ENCODE measurements at regions of chr16 and their contacts with region 1.

Region 1: DNA sequence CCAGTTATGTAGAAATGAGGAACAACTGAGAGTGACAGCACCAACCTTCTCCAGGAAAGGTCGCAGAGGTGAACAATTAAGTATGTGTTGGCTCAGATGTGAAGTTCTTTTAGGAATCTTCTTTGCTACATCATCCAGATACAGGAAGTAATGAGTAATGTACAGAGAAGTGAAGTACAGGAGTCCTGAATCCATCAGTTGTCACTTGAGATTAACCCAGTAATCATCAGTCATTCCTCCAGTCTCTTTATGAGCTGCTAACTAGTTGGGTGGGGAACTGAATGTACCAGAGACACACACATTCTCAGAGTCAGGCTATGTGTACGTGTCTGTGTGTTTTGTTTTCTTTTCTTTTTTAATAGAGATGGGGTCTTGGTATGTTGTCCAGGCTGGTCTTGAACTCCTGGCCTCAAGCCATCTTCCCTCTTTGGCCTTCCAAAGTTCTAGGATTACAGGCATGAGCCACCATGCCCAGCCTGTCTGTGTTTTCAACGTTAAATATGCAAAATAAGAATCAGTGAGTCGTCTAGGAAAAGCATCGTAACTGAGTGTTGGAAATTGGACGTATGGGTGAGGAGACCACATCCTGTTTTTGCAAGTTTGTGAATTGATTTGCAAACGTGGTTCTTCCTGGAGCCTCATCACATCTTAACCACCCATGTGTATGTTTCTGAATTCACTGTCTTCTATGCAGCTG is 19.9 kb downstream of the ZNF200 start:
- DNase-seq: peak in 7 of 14 experiments; percentile 30 to 89 (median 43)
- ATAC-seq: peak; percentile 86
- H3K4me3 ChIP-seq: no peak overlapping the region
- H3K4me3 Mint-ChIP-seq: peak overlapping the region; percentile 71
- H3K27ac ChIP-seq: peak overlapping the region; percentile 48 to 79
- H3K27ac Mint-ChIP-seq: peak overlapping the region; percentile 96
- H3K4me1 ChIP-seq: peaks cover 48% of the 10 kb centered on the region
- H3K4me1 Mint-ChIP-seq: peaks cover 39% of the 10 kb centered on the region
- H3K27me3 ChIP-seq: no peaks in the 10 kb centered on the region
- H3K27me3 Mint-ChIP-seq: no peaks in the 10 kb centered on the region
- CTCF ChIP-seq: no peak

Region 2: GRCh38 chr16:3158471-3159314 is 56.4 kb before region 1 on chr16:
- CTCF ChIA-PET with region 1: no interaction called
- POLR2A ChIA-PET with region 1: interaction called, 10 read pairs
- intact Hi-C with region 1: loop called in 1 of 2 experiments (anchors 5 kb)
- DNase-seq: peak; percentile 92 to 98 (median 94)
- ATAC-seq: peak; percentile 89
- H3K4me3 ChIP-seq: peak overlapping the region; percentile 85
- H3K4me3 Mint-ChIP-seq: peak overlapping the region; percentile 97
- H3K27ac ChIP-seq: peak overlapping the region; percentile 39 to 55
- H3K27ac Mint-ChIP-seq: peak overlapping the region; percentile 97
- H3K4me1 ChIP-seq: peaks cover 28% of the 10 kb centered on the region
- H3K4me1 Mint-ChIP-seq: peaks cover 18% of the 10 kb centered on the region
- H3K27me3 ChIP-seq: no peaks in the 10 kb centered on the region
- H3K27me3 Mint-ChIP-seq: peaks cover 7% of the 10 kb centered on the region
- CTCF ChIP-seq: no peak

Region 3: DNA sequence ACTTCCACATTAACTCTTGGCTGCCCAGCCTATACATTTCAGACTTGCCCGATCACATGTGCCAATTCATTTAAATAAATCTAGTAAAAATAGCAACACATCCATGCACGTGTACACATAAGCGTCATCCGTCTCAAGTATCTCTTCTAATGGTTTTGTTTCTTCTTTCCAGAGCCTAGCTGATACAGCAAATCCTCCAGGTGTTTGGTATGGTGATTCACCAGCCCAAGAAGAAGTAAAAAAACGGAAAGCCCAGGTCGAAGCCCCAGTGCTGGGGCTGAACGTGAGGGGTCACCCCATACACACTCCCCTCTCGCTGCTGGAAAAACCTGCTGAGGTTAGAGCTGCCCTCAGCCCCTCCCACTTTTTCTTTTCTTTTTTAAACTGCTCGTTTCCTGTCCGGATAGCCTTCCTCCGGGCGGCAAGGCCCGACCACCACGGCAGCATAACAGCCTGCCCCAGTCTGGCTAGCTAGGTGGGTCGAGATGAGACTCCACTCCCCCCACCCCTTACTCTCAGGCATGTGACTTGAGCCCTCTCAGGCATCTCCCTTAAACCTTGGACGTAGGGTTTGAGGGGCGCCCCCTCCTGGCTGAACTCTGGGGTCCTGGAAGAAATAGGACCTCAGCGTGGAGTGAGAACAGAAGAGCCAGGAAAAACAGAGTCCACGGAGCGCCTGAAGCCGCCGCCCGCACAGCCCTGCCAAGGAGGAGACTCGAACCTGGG is 41.0 kb before region 1 on chr16:
- CTCF ChIA-PET with region 1: no interaction called
- POLR2A ChIA-PET with region 1: interaction called, 9 read pairs
- intact Hi-C with region 1: loop called in 1 of 2 experiments (anchors 5 kb)
- DNase-seq: peak in 1 of 14 experiments; percentile 52
- ATAC-seq: peak; percentile 11
- H3K4me3 ChIP-seq: no peak overlapping the region
- H3K4me3 Mint-ChIP-seq: peak overlapping the region; percentile 0
- H3K27ac ChIP-seq: no peak overlapping the region
- H3K27ac Mint-ChIP-seq: no peak overlapping the region
- H3K4me1 ChIP-seq: peaks cover 44% of the 10 kb centered on the region
- H3K4me1 Mint-ChIP-seq: peaks cover 44% of the 10 kb centered on the region
- H3K27me3 ChIP-seq: peaks cover 69 to 81% of the 10 kb centered on the region in 2 experiments
- H3K27me3 Mint-ChIP-seq: peaks cover 70% of the 10 kb centered on the region
- CTCF ChIP-seq: no peak

Region 4: DNA sequence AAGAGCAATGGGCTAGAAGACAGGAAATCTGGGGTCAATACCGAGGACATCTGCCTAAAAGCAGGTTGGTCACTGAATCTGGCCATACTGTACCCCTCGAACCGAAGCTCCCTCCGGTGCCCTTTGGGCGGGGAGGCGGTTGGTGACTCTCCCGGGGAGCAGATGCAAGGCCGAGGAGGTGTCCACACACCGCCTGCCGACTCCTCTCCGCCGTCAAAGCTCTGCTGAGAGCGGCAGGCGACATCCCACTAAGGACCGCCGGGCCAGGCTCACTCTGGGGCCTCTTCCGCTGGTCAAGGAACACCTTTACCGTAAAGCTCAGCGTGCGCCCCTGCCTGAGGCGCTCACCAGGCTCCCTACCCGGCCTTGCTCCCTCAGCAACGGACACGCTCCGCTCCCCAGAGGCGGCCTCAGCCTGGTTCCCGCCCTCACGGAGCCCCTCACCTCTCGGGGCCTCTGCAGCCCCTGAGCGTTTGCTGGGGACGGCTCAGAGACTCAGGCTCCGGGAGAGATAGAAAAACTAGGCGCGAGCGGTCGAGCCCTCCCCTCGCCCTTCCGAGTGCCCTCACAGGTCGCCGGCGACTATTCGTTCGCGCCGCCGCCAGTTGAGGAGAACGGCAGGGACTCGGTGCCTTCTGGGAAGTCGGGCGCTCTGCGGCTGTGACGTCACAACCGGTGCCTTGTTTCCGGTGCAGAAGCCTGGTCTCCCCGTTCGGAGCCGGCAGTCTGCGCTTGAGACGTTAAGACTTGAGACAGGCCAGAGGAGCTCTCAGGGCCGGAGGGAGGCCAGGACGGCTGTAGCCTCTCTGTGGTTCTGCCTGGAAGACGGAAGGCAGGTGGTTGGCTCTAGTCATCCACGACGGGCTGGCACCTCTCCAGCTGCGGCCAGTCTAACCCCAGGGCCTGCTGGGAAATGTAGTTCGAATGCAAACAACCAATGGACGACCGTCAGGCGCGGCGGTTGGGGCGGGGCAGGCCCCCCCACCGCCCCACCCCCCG is 19.8 kb after region 1 on chr16 and contains the start of gene ZNF200:
- CTCF ChIA-PET with region 1: no interaction called
- POLR2A ChIA-PET with region 1: interaction called, 20 read pairs
- intact Hi-C with region 1: loop called (anchors 1 kb)
- DNase-seq: peak; percentile 86 to 97 (median 90)
- ATAC-seq: peak; percentile 89
- H3K4me3 ChIP-seq: peak within 1 kb of the TSS; percentile 98
- H3K4me3 Mint-ChIP-seq: peak within 1 kb of the TSS; percentile 94
- H3K27ac ChIP-seq: peak within 1 kb of the TSS; percentile 88 to 97
- H3K27ac Mint-ChIP-seq: peak within 1 kb of the TSS; percentile 94
- H3K4me1 ChIP-seq: peaks cover 27% of the 10 kb centered on the region
- H3K4me1 Mint-ChIP-seq: peaks cover 50% of the 10 kb centered on the region
- H3K27me3 ChIP-seq: no peaks in the 10 kb centered on the region
- H3K27me3 Mint-ChIP-seq: no peaks in the 10 kb centered on the region
- CTCF ChIP-seq: no peak
- total RNA-seq, gene ZNF200: 7.0 to 7.2 TPM

Measured in CD4-positive, alpha-beta T cell (primary cell).